GM10248 (cell line): ENCODE measurements at regions of chr7 and their contacts with region 1.

Region 1: GRCh38 chr7:131654668-131655326 is 98.4 kb upstream of the PODXL start:
- DNase-seq: peak; percentile 91
- CTCF ChIP-seq: peak; percentile 99

Region 2: DNA sequence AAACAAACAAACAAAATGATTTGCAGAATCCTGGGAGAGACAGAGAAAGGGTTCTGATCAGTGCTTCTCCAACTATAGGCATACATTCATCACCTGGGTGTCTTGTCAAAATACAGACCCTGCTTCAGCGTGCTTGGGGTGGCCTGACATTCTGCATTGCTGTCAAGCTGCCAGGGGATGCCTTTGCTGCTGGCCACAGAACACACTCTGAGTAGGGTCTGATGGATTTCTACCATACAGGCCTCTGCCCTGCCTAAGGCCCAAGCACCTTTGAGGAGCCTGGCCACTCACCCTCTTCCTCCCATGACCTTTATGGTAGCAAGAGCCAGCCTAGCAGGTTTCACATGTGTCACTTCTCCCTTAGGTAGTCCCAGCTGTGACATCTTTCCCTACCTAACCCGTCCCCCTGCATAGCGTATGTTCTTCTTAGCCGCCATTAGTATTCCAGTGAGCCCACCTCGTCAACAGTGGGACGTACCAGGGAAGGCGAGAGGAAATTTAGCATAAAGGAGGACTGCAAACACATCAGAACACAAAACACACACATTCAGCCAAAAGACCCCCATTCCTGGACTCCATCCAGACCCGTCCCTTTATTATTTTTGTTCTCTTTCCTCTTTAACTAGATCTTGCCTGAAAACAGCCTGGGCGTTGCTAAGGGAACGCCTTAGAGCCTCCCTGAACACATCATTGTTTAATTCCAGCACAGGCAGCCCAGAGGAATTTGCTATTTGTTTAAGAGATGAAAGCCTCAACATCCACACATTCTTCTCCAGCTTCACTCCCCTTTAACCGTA is 54.5 kb before region 1 on chr7:
- CTCF ChIA-PET with region 1: no interaction called
- POLR2A ChIA-PET with region 1: no interaction called
- DNase-seq: no peak
- CTCF ChIP-seq: no peak

Region 3: DNA sequence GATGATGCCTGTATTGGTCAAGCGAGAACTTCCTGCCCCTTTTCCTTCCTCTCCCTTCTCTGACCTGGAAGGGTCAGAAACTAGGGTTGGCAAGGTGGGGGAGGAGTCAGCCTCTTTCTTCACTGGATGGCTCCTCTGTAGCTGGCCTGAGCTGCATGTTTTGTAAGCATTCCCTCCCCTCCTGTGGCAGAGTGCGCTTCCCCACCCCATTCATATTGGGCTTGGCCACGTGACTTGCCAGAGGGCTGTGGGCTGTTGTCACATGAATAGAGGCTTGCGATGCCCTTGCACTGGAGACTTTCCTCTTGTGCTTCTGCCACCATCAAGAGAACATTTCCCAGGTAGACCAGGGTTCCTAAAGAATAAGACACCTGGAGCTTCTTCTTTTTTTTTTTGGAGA is 12.9 kb after region 1 on chr7:
- CTCF ChIA-PET with region 1: interaction called, 12 read pairs
- POLR2A ChIA-PET with region 1: no interaction called
- DNase-seq: no peak
- CTCF ChIP-seq: no peak